HEK293 (cell line): ENCODE measurements at regions of chr9 and their contacts with region 1.

Region 1: DNA sequence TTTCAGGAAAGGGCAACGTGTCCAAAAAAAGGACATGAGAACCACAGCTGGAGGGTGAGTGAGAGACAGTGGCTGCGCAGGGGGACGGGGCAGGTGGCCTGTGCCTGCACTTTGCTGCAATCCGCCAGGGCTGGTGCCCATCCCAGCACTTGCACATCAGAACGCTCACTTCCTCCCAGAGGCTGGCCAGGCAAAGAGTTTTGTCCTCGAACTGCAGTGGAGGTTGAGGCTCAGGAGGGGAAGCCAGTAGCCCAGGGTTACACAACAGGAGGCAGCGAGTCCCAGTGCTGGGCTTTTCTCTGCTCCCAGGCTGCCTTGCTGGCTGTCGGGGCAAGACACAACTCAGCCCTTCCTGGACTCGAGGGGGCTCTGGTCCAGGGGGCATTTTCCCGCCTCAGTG is 33.1 kb downstream of the CRB2 start:
- H3K4me3 ChIP-seq: no peak overlapping the region
- H3K27ac ChIP-seq: no peak overlapping the region
- H3K4me1 ChIP-seq: no peaks in the 10 kb centered on the region
- CTCF ChIP-seq: no peak

Region 2: GRCh38 chr9:123081824-123082223 is 307.2 kb before region 1 on chr9:
- CTCF ChIA-PET with region 1: interaction called, 17 read pairs
- POLR2A ChIA-PET with region 1: no interaction called
- H3K4me3 ChIP-seq: no peak overlapping the region
- H3K27ac ChIP-seq: no peak overlapping the region
- H3K4me1 ChIP-seq: no peaks in the 10 kb centered on the region
- CTCF ChIP-seq: 0 out of 2 replicates have a peak, but pooled peaks have one; percentile 11

Region 3: DNA sequence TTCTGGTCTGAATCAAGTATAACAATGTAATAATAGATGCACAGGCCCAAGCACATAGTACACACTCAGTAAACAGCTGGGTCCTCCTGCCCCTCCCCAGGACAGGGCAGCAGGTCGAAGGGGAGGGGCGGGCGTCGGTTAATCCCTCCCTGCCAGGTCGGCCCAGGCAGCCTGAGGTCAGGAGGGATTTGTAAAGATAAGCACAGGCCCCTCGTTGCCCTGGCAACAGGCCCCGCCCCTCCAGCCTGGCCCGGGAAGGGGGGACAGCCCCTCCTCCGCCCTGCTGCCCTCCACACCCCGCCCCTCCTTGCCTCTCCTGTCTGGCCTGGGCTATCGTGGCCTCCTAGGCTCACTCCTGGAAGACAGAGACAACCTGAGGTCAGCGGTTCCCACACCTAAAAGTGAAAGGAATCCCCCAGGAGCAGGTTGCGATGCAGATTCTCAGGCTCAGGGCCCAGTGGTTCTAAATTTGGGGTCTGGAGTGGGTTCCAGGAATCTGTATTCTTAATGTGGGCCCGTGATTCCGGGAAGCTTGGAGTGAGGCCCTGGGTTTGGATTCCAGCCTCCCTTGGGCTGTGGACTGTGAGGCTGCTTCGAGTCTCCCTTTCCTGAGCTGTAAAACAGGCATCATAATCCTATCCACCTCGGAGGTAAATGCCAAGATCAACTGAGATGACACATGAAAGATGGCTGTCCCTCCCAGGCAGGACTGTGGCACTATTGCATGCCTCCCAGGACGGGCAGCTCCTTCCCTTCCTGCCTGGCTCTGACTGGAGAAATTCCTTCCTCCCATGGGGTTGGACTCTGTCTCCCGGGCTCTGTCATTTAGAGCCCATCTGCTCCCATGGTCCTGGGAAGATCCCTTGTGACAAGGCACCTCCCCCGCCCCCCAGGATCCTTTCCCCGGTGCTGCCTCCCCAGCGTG is 28.6 kb before region 1 on chr9:
- CTCF ChIA-PET with region 1: interaction called, 106 read pairs
- POLR2A ChIA-PET with region 1: no interaction called
- H3K4me3 ChIP-seq: no peak overlapping the region
- H3K27ac ChIP-seq: no peak overlapping the region
- H3K4me1 ChIP-seq: no peaks in the 10 kb centered on the region
- CTCF ChIP-seq: no peak

Region 4: DNA sequence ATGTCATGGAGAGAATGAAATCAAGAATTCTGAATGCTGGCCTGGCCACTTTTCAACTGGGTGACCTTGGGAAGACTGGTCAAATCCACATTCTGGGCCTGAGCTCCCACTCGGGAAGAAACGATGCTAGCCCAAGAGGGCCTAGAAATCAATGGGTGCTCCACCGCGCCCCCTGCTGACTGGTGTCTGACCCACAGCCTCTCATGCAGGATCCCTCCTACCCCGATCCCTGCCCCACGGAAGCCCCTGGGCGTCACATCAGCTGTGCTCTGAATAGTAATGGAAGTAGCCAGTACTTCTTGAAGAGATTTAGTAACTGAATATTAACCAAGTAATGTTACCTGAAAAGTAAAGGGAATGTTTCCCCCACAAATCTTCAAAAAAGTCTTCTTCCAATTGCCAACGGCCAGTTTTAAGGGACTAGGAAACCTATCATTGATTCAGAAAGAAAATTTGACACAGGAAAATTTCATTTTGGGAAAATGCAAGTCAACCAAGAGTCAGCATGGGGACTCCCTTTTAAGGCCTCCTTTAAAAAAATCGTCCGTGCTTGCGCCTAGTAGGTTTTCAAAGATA is 10.8 kb after region 1 on chr9:
- CTCF ChIA-PET with region 1: interaction called, 10 read pairs
- POLR2A ChIA-PET with region 1: interaction called, 3 read pairs
- H3K4me3 ChIP-seq: no peak overlapping the region
- H3K27ac ChIP-seq: no peak overlapping the region
- H3K4me1 ChIP-seq: no peaks in the 10 kb centered on the region
- CTCF ChIP-seq: 0 out of 2 replicates have a peak, but pooled peaks have one; percentile 12

Region 5: GRCh38 chr9:123434619-123435528 is 45.8 kb after region 1 on chr9:
- CTCF ChIA-PET with region 1: no interaction called
- POLR2A ChIA-PET with region 1: no interaction called
- H3K4me3 ChIP-seq: no peak overlapping the region
- H3K27ac ChIP-seq: no peak overlapping the region
- H3K4me1 ChIP-seq: no peaks in the 10 kb centered on the region
- CTCF ChIP-seq: no peak; the same call in 1 of the 2 replicates